H1 (cell line): ENCODE measurements at regions of chr9 and their contacts with region 1.

Region 1: GRCh38 chr9:3441197-3441816 is 84.5 kb downstream of the RFX3 start:
- DNase-seq: no peak
- H3K4me3 ChIP-seq: no peak overlapping the region
- H3K27ac ChIP-seq: no peak overlapping the region
- H3K4me1 ChIP-seq: no peaks in the 10 kb centered on the region
- H3K27me3 ChIP-seq: no peaks in the 10 kb centered on the region
- CTCF ChIP-seq: peak in 2 of 3 experiments; percentile 64 to 67; a peak in 3 of 4 replicates
- EP300 ChIP-seq: no peak
- POLR2A ChIP-seq: no peak
- RAD21 ChIP-seq: peak; percentile 68 to 71

Region 2: GRCh38 chr9:3240656-3241268 is 200.5 kb before region 1 on chr9:
- CTCF ChIA-PET with region 1: interaction called, 44 read pairs
- POLR2A ChIA-PET with region 1: no interaction called
- DNase-seq: peak; percentile 49 to 74
- H3K4me3 ChIP-seq: no peak overlapping the region
- H3K27ac ChIP-seq: no peak overlapping the region
- H3K4me1 ChIP-seq: peaks cover 0 to 5% (median 2%) of the 10 kb centered on the region in 4 experiments; a peak in 4 of 7 replicates
- H3K27me3 ChIP-seq: no peaks in the 10 kb centered on the region
- CTCF ChIP-seq: peak; percentile 83 to 92 (median 92)
- EP300 ChIP-seq: no peak
- POLR2A ChIP-seq: no peak
- RAD21 ChIP-seq: peak; percentile 88 to 92

Region 3: DNA sequence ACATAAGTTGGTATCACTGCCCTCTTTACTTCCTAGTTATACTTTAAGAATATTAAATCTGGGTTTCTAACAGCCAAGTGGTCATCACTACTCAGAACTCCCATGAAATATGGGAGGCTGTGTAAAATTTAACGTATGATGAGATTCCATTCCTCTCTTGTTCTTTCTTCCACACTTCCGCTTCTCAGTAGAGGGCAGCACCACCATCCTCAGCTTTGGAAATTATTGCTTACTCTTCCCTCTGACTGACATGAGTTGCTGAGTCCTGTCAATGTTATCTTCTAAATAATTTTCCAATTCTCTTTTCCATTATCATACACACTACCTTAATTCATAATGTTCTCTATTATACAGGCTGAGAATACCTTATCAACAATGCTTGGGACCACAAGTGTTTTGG is 109.5 kb before region 1 on chr9:
- CTCF ChIA-PET with region 1: interaction called, 43 read pairs
- POLR2A ChIA-PET with region 1: no interaction called
- DNase-seq: no peak
- H3K4me3 ChIP-seq: no peak overlapping the region
- H3K27ac ChIP-seq: no peak overlapping the region
- H3K4me1 ChIP-seq: peaks cover 0 to 2% (median 0%) of the 10 kb centered on the region in 4 experiments; a peak in 1 of 7 replicates
- H3K27me3 ChIP-seq: no peaks in the 10 kb centered on the region
- CTCF ChIP-seq: peak in 2 of 3 experiments; percentile 43 to 58; a peak in 3 of 4 replicates
- EP300 ChIP-seq: no peak
- POLR2A ChIP-seq: no peak
- RAD21 ChIP-seq: peak; percentile 47 to 62; a peak in 3 of 4 replicates

Region 4: DNA sequence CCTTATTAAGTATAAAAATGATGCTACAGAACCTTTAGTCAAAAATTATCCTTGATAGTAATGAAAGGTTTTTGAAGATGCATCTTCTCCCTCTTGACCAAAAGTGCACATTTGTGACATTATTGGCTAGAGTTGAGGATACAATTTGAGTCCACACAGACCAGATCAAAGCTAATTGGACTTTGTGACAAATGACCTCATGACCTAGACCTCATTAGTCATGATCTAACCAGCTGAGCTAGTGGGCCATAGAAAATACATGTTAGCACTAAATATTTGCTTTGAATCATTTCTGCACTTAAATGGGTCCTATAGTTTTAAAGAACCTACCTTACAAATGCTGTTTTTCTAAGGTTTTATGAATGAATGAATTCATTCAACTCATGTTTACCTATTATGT is 97.6 kb before region 1 on chr9:
- CTCF ChIA-PET with region 1: interaction called, 10 read pairs
- POLR2A ChIA-PET with region 1: no interaction called
- DNase-seq: no peak
- H3K4me3 ChIP-seq: no peak overlapping the region
- H3K27ac ChIP-seq: no peak overlapping the region
- H3K4me1 ChIP-seq: no peaks in the 10 kb centered on the region
- H3K27me3 ChIP-seq: no peaks in the 10 kb centered on the region
- CTCF ChIP-seq: no peak
- EP300 ChIP-seq: no peak
- POLR2A ChIP-seq: no peak
- RAD21 ChIP-seq: no peak

Region 5: GRCh38 chr9:3413984-3414383 is 27.3 kb before region 1 on chr9:
- CTCF ChIA-PET with region 1: interaction called, 17 read pairs
- POLR2A ChIA-PET with region 1: no interaction called
- DNase-seq: no peak
- H3K4me3 ChIP-seq: no peak overlapping the region
- H3K27ac ChIP-seq: no peak overlapping the region
- H3K4me1 ChIP-seq: no peaks in the 10 kb centered on the region
- H3K27me3 ChIP-seq: no peaks in the 10 kb centered on the region
- CTCF ChIP-seq: no peak
- EP300 ChIP-seq: no peak
- POLR2A ChIP-seq: no peak
- RAD21 ChIP-seq: no peak

Region 6: GRCh38 chr9:3451956-3452355 is 10.6 kb after region 1 on chr9:
- CTCF ChIA-PET with region 1: interaction called, 19 read pairs
- POLR2A ChIA-PET with region 1: no interaction called
- DNase-seq: no peak
- H3K4me3 ChIP-seq: no peak overlapping the region
- H3K27ac ChIP-seq: no peak overlapping the region
- H3K4me1 ChIP-seq: peaks cover 0 to 3% (median 0%) of the 10 kb centered on the region in 4 experiments; a peak in 1 of 7 replicates
- H3K27me3 ChIP-seq: no peaks in the 10 kb centered on the region
- CTCF ChIP-seq: no peak
- EP300 ChIP-seq: no peak
- POLR2A ChIP-seq: no peak
- RAD21 ChIP-seq: no peak